Tibial artery (tissue), 4 donors: ENCODE measurements at regions of chr4 and their contacts with region 1.

Region 1: DNA sequence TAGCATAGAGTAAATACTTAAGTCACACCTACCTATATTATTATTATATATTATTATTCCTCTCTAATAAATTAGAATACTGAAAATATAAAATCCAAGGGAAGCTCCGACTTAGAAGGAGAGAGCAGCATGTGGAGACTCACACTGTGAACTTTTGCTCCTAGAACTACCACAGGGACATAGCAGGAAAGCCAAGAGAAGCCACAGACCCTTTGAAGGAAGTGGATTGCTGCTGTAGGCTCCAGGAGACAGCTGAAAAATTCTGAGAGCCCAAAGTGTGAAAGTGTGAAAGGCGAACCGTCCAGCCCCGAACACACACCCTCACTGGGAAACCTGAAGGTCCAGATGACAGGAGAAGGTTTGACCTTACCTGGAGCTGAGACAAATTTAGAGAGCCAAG is 177.0 kb downstream of the FAM13A start:
- DNase-seq: no peak
- H3K4me3 ChIP-seq: no peak overlapping the region
- H3K27ac ChIP-seq: no peak overlapping the region
- H3K4me1 ChIP-seq: peaks cover 0 to 15% (median 2%) of the 10 kb centered on the region in 4 donors
- H3K27me3 ChIP-seq: no peaks in the 10 kb centered on the region
- CTCF ChIP-seq: no peak

Region 2: DNA sequence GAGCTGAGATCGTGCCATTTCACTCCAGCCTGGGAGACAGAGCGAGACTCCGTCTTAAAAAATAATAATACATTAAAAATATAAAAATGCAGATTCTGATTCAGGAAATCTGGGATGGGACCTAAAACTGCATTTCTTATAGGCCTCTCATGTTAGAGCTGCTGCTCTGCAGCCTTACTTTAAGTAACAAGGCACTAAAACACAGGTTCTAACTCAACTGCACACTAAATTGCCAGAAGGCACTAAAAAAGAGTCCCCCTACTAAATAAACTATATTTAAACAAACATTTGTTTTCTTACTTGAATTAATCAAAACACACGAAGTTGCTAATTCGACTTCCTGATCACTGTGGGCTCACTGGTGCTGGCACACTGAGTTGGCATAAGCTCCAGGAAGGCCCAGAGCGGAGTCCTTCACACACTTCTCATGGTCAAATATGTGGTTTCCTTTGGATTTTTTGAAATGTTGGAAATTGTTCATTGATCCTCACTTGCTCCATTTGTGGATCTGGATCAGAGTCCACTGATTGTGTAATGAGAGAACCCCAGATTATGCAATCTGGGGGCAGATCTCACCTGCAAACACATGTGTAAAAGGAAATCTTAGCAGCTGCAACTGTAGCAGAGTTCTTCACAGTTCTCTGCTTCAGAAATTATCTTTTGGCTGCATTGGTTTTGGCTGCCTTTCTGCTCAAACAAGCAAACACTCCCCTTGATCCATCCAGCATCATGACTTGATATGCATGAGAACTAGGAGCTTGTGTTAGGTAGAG is 1885.9 kb before region 1 on chr4:
- intact Hi-C with region 1: loop called (anchors 5 kb)
- DNase-seq: no peak
- H3K4me3 ChIP-seq: no peak overlapping the region
- H3K27ac ChIP-seq: no peak overlapping the region
- H3K4me1 ChIP-seq: peaks cover 0 to 11% (median 2%) of the 10 kb centered on the region in 4 donors
- H3K27me3 ChIP-seq: no peaks in the 10 kb centered on the region
- CTCF ChIP-seq: no peak

Region 3: DNA sequence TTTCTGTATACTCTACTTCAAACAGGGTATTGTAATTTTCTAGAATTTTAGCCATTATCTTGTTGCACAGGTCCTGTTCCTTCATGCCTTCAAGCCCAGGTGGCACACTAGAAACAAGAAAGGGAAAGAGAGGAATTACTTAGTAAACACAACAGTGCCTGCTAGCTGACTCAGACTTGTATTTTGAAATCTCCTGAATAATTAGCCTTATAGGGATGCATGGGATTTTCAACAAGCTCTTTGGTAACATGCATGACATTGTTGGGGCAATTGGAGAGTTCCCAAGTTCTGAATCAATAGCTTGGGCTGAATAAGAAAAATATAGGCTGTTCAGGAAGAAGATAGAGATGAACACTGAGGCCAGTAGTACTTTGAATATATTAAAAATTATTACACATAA is 58.1 kb after region 1 on chr4:
- intact Hi-C with region 1: no loop called
- DNase-seq: no peak
- H3K4me3 ChIP-seq: no peak overlapping the region
- H3K27ac ChIP-seq: no peak overlapping the region
- H3K4me1 ChIP-seq: no peaks in the 10 kb centered on the region
- H3K27me3 ChIP-seq: no peaks in the 10 kb centered on the region
- CTCF ChIP-seq: no peak